OCI-LY7 (cell line): ENCODE measurements at regions of chr4 and their contacts with region 1.

Region 1: DNA sequence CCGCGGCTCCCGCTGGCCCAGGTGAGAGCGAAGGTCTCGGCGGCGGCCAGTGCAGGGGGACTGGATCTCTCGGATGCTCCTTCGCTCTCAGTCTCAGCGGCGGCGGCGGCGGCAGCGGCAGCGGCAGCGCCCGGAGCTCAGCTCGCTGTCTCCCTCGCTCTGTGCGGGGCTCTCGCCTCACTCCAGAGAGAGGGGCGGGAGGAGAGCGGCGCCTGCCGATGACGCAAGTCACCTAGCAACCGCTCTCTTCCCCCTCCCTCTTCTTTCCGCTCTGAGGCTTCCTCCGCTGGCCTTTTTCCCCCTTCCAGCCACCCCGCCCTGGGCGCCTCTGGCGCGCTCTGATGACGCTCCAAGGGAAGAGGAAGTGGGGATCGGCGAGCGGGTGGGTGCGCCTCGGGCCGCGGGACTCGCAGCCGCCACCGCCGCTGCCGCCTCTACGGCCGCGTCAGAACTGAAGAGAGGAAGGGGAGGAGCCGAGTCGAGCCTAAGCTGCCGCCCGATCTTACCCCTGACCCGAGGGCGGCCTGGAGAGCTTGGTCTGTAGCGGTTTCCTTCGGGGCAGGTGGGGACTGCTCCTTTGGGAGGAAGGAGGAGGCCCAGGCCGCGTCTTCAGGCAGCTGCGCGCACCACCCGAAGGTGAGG is at the start of gene FBXW7:
- DNase-seq: peak; percentile 99
- H3K4me3 ChIP-seq: peak within 1 kb of the TSS; percentile 84
- H3K27ac ChIP-seq: peak within 1 kb of the TSS; percentile 90
- H3K4me1 ChIP-seq: peaks cover 48% of the 10 kb centered on the region
- CTCF ChIP-seq: no peak
- total RNA-seq, gene FBXW7: 58.8 and 97.7 TPM in 2 replicates

Region 2: DNA sequence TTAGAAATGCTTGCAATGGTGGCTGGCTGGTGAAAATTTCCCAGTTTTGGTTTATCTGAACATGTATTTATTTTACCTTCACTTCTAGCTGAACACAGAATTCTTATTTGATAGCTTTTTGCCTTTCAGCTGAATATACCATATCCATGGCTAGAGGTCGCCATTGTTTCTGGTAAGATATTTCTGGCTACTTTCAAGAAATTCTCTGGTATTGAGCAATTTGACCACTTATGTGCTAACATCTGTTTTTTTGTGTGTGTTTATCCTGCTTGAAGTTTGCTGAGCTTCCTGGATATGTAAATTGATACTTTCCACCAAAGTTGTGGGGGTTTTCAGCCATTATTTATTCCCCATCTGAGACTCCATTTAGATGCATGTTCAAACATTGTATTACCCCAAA is 75.5 kb before region 1 on chr4:
- CTCF ChIA-PET with region 1: no interaction called
- POLR2A ChIA-PET with region 1: interaction called, 3 read pairs
- intact Hi-C with region 1: loop called (anchors 1 kb)
- DNase-seq: peak; percentile 29
- H3K4me3 ChIP-seq: no peak overlapping the region
- H3K27ac ChIP-seq: no peak overlapping the region
- H3K4me1 ChIP-seq: peaks cover 71% of the 10 kb centered on the region
- CTCF ChIP-seq: peak; percentile 74

Region 3: DNA sequence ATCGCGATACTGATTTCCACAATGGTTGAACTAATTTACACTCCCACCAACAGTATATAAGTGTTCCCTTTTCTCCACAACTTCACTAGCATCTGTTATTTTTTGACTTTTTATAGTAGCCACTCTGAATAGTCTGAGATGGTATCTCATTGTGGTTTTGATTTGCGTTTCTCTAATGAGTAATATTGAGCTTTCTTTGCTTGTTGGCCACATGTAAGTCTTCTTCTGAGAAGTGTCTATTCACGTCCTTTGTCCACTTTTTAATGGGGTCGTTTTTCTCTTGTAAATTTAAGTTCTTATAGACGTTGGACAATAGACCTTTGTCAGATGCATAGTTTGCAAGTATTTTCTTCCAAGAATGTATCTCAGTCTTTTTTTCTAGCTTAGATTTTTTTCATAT is 10.2 kb before region 1 on chr4:
- CTCF ChIA-PET with region 1: interaction called, 3 read pairs
- POLR2A ChIA-PET with region 1: interaction called, 29 read pairs
- intact Hi-C with region 1: no loop called
- DNase-seq: no peak
- H3K4me3 ChIP-seq: no peak overlapping the region
- H3K27ac ChIP-seq: no peak overlapping the region
- H3K4me1 ChIP-seq: peaks cover 13% of the 10 kb centered on the region
- CTCF ChIP-seq: no peak

Region 4: GRCh38 chr4:152556283-152556682 is 20.3 kb after region 1 on chr4:
- CTCF ChIA-PET with region 1: interaction called, 5 read pairs
- POLR2A ChIA-PET with region 1: interaction called, 91 read pairs
- intact Hi-C with region 1: no loop called
- DNase-seq: peak; percentile 67
- H3K4me3 ChIP-seq: peak overlapping the region; percentile 65
- H3K27ac ChIP-seq: peak overlapping the region; percentile 46
- H3K4me1 ChIP-seq: peaks cover 65% of the 10 kb centered on the region
- CTCF ChIP-seq: no peak